ENCODE measurements at regions of chr15 and their contacts with region 1.

Region 1: GRCh38 chr15:73767821-73768501 is 14.8 kb upstream of the INSYN1 start:
- DNase-seq: no peak
- H3K4me3 ChIP-seq: no peak overlapping the region
- H3K27ac ChIP-seq: no peak overlapping the region
- H3K4me1 ChIP-seq: no peaks in the 10 kb centered on the region
- H3K27me3 ChIP-seq: no peaks in the 10 kb centered on the region
- CTCF ChIP-seq: no peak

Region 2: GRCh38 chr15:73732930-73733329 is 35.0 kb before region 1 on chr15:
- CTCF ChIA-PET with region 1: no interaction called
- dilution Hi-C with region 1: loop called (anchors 5 kb)
- in situ Hi-C with region 1: no loop called
- intact Hi-C with region 1: no loop called
- DNase-seq: no peak
- H3K4me3 ChIP-seq: no peak overlapping the region
- H3K27ac ChIP-seq: no peak overlapping the region
- H3K4me1 ChIP-seq: no peaks in the 10 kb centered on the region
- H3K27me3 ChIP-seq: no peaks in the 10 kb centered on the region
- CTCF ChIP-seq: no peak

Measured in mammary epithelial cell (primary cell).